CD4-positive, alpha-beta memory T cell (primary cell): ENCODE measurements at regions of chr14 and their contacts with region 1.

Region 1: DNA sequence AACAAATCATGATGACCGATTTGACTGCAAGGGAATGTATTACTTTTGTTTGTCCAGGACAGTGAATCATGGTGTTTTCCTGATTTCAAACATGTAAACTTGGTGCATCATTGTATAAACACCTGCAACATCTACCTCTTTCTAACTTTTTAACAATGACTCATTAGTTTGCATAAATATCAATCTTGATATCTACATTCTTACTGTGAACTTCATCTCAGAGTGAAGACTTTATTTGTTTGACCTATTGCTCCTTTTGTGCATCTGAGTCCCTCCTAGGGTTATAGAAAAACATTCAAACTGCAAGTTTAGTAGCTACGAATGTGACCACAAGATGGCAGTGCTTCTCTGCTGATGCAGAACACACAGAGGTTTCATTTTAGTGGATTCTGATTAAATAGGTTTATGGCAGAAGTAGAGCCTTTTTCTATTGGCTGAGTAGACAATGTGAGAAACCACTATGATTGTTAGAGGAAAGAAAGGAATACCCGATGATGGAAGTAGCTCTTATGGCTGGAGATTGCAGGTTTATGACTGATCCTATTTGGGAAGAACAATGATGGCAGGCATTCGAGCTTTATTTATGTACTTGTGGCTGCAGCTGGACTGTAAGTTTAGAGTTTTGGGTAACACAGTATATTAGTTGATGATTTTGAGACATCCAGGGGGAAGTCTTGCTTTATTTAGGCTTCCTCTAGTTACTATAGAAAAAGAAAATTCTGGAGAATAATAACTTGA is 244.2 kb upstream of the OR4E1 start:
- DNase-seq: peak; percentile 52 to 63 (median 60)
- H3K4me3 ChIP-seq: peak overlapping the region in 1 of 2 donors; percentile 0
- H3K4me3 Mint-ChIP-seq: peak overlapping the region; percentile 55 to 86 (median 82)
- H3K27ac ChIP-seq: peak overlapping the region; percentile 35
- H3K27ac Mint-ChIP-seq: peak overlapping the region; percentile 44 to 95 (median 58)
- H3K4me1 ChIP-seq: peaks cover 64% of the 10 kb centered on the region
- H3K4me1 Mint-ChIP-seq: peaks cover 18 to 65% (median 38%) of the 10 kb centered on the region in 4 donors
- H3K27me3 ChIP-seq: no peaks in the 10 kb centered on the region
- H3K27me3 Mint-ChIP-seq: no peaks in the 10 kb centered on the region

Region 2: GRCh38 chr14:21868442-21869046 is 49.3 kb before region 1 on chr14:
- CTCF ChIA-PET with region 1: interaction called, 19 read pairs
- POLR2A ChIA-PET with region 1: interaction called, 10 read pairs
- intact Hi-C with region 1: loop called (anchors 1 kb)
- DNase-seq: peak; percentile 64 to 82 (median 68)
- H3K4me3 ChIP-seq: no peak overlapping the region
- H3K4me3 Mint-ChIP-seq: peak overlapping the region; percentile 59 to 83 (median 74)
- H3K27ac ChIP-seq: no peak overlapping the region
- H3K27ac Mint-ChIP-seq: peak overlapping the region in 6 of 7 donors; percentile 53 to 83 (median 66)
- H3K4me1 ChIP-seq: peaks cover 31% of the 10 kb centered on the region
- H3K4me1 Mint-ChIP-seq: peaks cover 9 to 45% (median 24%) of the 10 kb centered on the region in 4 donors
- H3K27me3 ChIP-seq: no peaks in the 10 kb centered on the region
- H3K27me3 Mint-ChIP-seq: peaks cover 0 to 1% of the 10 kb centered on the region in 2 donors

Region 3: GRCh38 chr14:21882226-21882625 is 35.6 kb before region 1 on chr14:
- CTCF ChIA-PET with region 1: interaction called, 10 read pairs
- POLR2A ChIA-PET with region 1: no interaction called
- intact Hi-C with region 1: no loop called
- DNase-seq: no peak
- H3K4me3 ChIP-seq: no peak overlapping the region
- H3K4me3 Mint-ChIP-seq: peak overlapping the region in 1 of 8 donors; percentile 43
- H3K27ac ChIP-seq: no peak overlapping the region
- H3K27ac Mint-ChIP-seq: no peak overlapping the region
- H3K4me1 ChIP-seq: peaks cover 2% of the 10 kb centered on the region
- H3K4me1 Mint-ChIP-seq: peaks cover 4 to 22% (median 8%) of the 10 kb centered on the region in 4 donors
- H3K27me3 ChIP-seq: no peaks in the 10 kb centered on the region
- H3K27me3 Mint-ChIP-seq: no peaks in the 10 kb centered on the region

Region 4: DNA sequence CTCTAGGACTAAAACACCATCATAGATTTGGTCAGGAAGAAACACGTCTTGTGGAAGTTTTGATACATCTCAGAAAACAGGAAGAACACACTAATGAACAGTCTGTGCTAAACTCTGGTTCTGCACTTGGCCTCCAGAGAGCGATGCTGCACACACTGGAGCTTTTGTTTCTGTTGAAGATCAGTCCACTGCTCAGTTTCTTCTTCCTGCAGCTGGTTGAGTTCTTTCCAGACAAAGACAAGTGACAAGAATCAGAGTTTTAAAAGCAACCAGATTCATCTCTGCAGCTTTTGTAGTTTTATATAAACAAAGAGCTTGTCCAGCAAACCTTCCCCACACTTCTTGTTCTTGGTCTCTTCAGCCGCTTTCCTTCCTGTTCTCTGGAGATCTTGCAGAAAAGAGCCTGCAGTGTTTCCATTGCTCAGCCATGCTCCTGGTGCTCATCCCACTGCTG is 15.2 kb before region 1 on chr14:
- CTCF ChIA-PET with region 1: interaction called, 26 read pairs
- POLR2A ChIA-PET with region 1: interaction called, 8 read pairs
- intact Hi-C with region 1: no loop called
- DNase-seq: peak in 3 of 5 donors; percentile 37 to 56 (median 41)
- H3K4me3 ChIP-seq: no peak overlapping the region
- H3K4me3 Mint-ChIP-seq: peak overlapping the region; percentile 30 to 82 (median 68)
- H3K27ac ChIP-seq: no peak overlapping the region
- H3K27ac Mint-ChIP-seq: peak overlapping the region; percentile 74 to 90 (median 76)
- H3K4me1 ChIP-seq: peaks cover 4% of the 10 kb centered on the region
- H3K4me1 Mint-ChIP-seq: peaks cover 9 to 23% (median 13%) of the 10 kb centered on the region in 4 donors
- H3K27me3 ChIP-seq: no peaks in the 10 kb centered on the region
- H3K27me3 Mint-ChIP-seq: no peaks in the 10 kb centered on the region

Region 5: DNA sequence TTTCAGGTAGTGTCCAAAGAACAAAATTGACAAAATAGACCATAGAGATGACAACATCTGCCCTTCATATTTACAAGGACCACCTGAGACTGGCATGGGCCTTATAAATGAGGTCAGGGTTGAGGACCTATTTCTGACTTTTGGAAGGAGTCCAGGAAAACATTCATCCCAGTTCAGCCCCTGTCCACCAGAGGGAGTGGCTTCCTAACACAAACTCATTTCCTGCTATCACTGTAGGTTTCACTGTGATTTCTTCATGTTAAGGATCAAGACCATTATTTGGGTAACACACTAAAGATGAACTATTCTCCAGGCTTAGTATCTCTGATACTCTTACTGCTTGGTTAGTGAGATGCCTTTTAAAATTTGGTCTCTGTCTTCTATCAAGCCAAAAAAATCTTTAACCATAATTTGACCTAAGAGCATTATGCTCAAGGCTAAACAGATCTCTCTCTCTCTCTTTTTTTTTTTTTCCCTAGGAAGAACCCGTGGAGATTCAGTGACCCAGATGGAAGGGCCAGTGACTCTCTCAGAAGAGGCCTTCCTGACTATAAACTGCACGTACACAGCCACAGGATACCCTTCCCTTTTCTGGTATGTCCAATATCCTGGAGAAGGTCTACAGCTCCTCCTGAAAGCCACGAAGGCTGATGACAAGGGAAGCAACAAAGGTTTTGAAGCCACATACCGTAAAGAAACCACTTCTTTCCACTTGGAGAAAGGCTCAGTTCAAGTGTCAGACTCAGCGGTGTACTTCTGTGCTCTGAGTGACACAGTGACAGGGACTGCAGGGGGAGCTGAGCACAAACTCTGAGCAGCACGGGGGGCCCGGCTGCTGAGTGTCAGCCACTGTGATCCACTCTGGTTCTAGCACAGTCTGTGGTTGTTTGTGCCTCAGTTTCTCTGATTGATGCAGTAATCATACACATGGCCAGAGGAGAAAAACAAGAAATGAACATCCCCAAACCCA is 23.3 kb after region 1 on chr14:
- CTCF ChIA-PET with region 1: interaction called, 18 read pairs
- POLR2A ChIA-PET with region 1: interaction called, 5 read pairs
- intact Hi-C with region 1: loop called (anchors 2 kb)
- DNase-seq: peak; percentile 44 to 53 (median 47)
- H3K4me3 ChIP-seq: no peak overlapping the region
- H3K4me3 Mint-ChIP-seq: peak overlapping the region; percentile 65 to 86 (median 81)
- H3K27ac ChIP-seq: peak overlapping the region; percentile 26
- H3K27ac Mint-ChIP-seq: peak overlapping the region; percentile 31 to 88 (median 79)
- H3K4me1 ChIP-seq: peaks cover 13% of the 10 kb centered on the region
- H3K4me1 Mint-ChIP-seq: peaks cover 4 to 20% (median 15%) of the 10 kb centered on the region in 4 donors
- H3K27me3 ChIP-seq: no peaks in the 10 kb centered on the region
- H3K27me3 Mint-ChIP-seq: peaks cover 0 to 9% of the 10 kb centered on the region in 2 donors

Region 6: DNA sequence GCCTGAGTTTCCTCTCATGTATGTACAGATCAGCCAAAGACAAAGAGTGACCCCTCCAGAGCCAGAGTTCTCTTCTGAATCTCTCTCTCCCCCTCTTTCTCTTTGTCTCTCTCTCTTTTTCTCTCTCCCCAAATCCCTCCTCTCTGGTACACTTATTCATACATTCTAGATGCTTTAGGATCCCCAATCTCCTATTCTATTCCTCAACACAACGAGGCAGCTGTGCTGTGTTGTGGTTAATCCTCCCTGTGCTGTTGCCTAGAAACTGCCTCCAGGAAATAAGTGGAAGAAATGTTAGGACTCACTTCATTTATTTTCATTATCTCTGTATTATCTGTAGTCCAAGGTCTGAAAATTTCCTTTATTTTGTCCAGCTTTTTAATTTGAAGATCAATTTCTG is 106.3 kb after region 1 on chr14:
- CTCF ChIA-PET with region 1: no interaction called
- POLR2A ChIA-PET with region 1: no interaction called
- intact Hi-C with region 1: no loop called
- DNase-seq: no peak
- H3K4me3 ChIP-seq: no peak overlapping the region
- H3K4me3 Mint-ChIP-seq: no peak overlapping the region
- H3K27ac ChIP-seq: no peak overlapping the region
- H3K27ac Mint-ChIP-seq: peak overlapping the region in 1 of 7 donors; percentile 42
- H3K4me1 ChIP-seq: no peaks in the 10 kb centered on the region
- H3K4me1 Mint-ChIP-seq: peaks cover 0 to 7% (median 2%) of the 10 kb centered on the region in 4 donors
- H3K27me3 ChIP-seq: no peaks in the 10 kb centered on the region
- H3K27me3 Mint-ChIP-seq: peaks cover 4 to 10% of the 10 kb centered on the region in 2 donors

Region 7: GRCh38 chr14:22502007-22502406 is 584.1 kb after region 1 on chr14:
- CTCF ChIA-PET with region 1: no interaction called
- POLR2A ChIA-PET with region 1: no interaction called
- intact Hi-C with region 1: loop called (anchors 5 kb)
- DNase-seq: no peak
- H3K4me3 ChIP-seq: peak overlapping the region; percentile 43 to 62
- H3K4me3 Mint-ChIP-seq: peak overlapping the region; percentile 86 to 96 (median 90)
- H3K27ac ChIP-seq: peak overlapping the region; percentile 67
- H3K27ac Mint-ChIP-seq: peak overlapping the region; percentile 87 to 100 (median 94)
- H3K4me1 ChIP-seq: peaks cover 67% of the 10 kb centered on the region
- H3K4me1 Mint-ChIP-seq: peaks cover 25 to 93% (median 30%) of the 10 kb centered on the region in 4 donors
- H3K27me3 ChIP-seq: no peaks in the 10 kb centered on the region
- H3K27me3 Mint-ChIP-seq: no peaks in the 10 kb centered on the region